ENCODE measurements at regions of chr11 and their contacts with region 1.

Region 1: GRCh38 chr11:34653826-34654490 is 33.1 kb downstream of the EHF start:
- DNase-seq: peak; percentile 98
- H3K4me3 ChIP-seq: no peak overlapping the region
- H3K27ac ChIP-seq: peak overlapping the region; percentile 78
- H3K4me1 ChIP-seq: peaks cover 42% of the 10 kb centered on the region
- H3K27me3 ChIP-seq: no peaks in the 10 kb centered on the region
- CTCF ChIP-seq: peak in 1 of 2 donors; percentile 50

Region 2: GRCh38 chr11:34512840-34513681 is 140.9 kb before region 1 on chr11:
- CTCF ChIA-PET with region 1: no interaction called
- dilution Hi-C with region 1: no loop called
- in situ Hi-C with region 1: no loop called
- intact Hi-C with region 1: loop called (anchors 10 kb)
- DNase-seq: peak; percentile 29
- H3K4me3 ChIP-seq: no peak overlapping the region
- H3K27ac ChIP-seq: no peak overlapping the region
- H3K4me1 ChIP-seq: no peaks in the 10 kb centered on the region
- H3K27me3 ChIP-seq: no peaks in the 10 kb centered on the region
- CTCF ChIP-seq: peak; percentile 88 to 92

Region 3: DNA sequence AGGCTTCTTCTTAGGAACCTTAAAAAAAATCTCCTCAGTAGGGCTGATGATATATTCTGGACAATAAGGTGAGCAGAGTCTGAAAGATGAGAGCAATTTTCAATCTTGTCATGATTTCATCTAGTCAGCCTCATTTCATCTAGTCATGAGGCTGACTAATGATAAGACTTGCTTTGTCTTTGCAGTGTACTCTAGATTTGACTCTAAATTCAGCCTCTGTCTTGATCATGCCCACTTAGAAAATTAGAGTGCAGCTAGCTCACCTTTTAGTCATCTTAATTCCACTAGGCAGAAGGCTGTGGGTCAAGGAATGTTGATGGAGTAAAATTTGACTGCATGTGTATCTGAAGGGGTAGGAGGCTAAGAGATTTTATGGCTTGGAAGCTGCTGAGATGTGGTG is 27.6 kb before region 1 on chr11:
- CTCF ChIA-PET with region 1: no interaction called
- dilution Hi-C with region 1: no loop called
- in situ Hi-C with region 1: no loop called
- intact Hi-C with region 1: loop called (anchors 2 kb)
- DNase-seq: peak; percentile 77
- H3K4me3 ChIP-seq: no peak overlapping the region
- H3K27ac ChIP-seq: peak overlapping the region; percentile 63
- H3K4me1 ChIP-seq: peaks cover 31% of the 10 kb centered on the region
- H3K27me3 ChIP-seq: no peaks in the 10 kb centered on the region
- CTCF ChIP-seq: no peak

Region 4: DNA sequence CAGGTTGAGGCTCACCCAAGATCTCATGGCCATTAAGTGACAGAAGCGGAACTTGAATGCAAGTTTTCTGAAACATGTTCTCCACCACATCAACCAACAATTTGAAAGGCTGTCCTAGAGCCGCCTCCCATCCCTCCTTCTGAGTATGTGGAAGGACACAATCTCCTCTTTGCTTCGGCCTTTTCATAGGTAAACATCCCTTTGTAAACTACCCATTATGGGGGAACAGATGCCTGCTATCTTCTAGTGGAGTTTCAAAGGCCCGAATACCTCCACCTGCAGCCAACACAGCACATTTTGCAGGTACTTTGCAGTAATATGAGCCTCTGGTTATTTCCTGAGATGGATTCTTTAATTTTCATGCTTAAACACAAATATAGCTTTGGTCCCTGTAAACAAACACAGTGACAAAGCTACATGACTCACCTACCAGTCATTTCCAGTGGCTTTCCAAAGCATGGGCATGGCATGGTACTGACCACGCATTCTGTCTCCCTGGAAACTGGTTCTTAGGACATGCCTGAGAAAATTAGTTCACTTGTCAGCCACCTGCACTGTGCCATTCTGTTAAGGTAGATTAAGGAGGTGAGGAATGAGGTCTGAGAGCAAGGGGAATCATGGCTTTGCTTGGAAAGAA is 27.1 kb after region 1 on chr11:
- CTCF ChIA-PET with region 1: no interaction called
- dilution Hi-C with region 1: no loop called
- in situ Hi-C with region 1: no loop called
- intact Hi-C with region 1: loop called (anchors 1 kb)
- DNase-seq: peak; percentile 90
- H3K4me3 ChIP-seq: no peak overlapping the region
- H3K27ac ChIP-seq: peak overlapping the region; percentile 60
- H3K4me1 ChIP-seq: peaks cover 36% of the 10 kb centered on the region
- H3K27me3 ChIP-seq: no peaks in the 10 kb centered on the region
- CTCF ChIP-seq: no peak

Measured in mammary epithelial cell (primary cell).